ENCODE measurements at regions of chr5 and their contacts with region 1.

Region 1: GRCh38 chr5:115544436-115545350 is at the start of gene FEM1C:
- DNase-seq: peak; percentile 97
- ATAC-seq: peak; percentile 97
- H3K4me3 ChIP-seq: peak within 1 kb of the TSS; percentile 86
- H3K27ac ChIP-seq: peak within 1 kb of the TSS; percentile 92
- H3K4me1 ChIP-seq: peaks cover 2% of the 10 kb centered on the region; the same call in 1 of the 2 replicates
- H3K27me3 ChIP-seq: no peaks in the 10 kb centered on the region
- CTCF ChIP-seq: no peak
- POLR2A ChIP-seq: peak; percentile 97
- RAD21 ChIP-seq: no peak
- total RNA-seq, gene FEM1C: 21.5 and 30.3 TPM in 2 replicates

Region 2: DNA sequence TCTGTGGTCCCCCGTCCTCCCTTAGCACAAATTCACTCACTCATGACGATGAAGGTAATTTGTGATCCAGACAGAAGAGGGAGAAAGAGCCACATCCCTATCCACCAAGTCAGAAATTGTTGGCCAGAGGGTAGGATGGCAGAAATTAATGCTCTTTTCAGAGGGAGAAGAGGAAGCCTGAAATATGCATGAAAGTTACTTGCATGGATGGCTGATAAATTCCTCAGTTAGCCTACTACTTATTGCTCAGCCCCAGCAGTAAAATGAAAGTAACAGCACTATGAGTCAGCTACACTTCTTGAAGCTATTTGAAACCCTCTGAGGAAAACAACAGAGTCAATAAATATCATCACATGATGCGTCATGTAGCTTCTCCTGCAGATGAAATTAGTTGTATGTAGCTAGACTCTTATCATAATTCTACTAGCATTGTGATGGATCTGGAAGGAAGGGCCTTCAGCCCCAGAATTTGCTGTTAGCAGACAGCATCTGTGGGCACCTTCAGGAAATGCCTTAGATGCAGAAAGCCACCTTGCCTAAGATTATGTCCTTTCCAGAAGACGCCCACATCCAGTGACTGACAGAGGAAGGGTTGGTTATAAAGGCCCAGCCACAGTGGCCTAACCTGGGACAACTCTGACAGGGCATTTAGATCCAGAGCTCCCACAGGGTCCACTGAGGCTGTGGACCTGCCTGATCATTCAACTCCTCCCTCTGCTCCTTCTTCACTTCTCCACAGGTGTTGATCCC is 167.1 kb before region 1 on chr5:
- CTCF ChIA-PET with region 1: interaction called, 3 read pairs
- POLR2A ChIA-PET with region 1: no interaction called
- dilution Hi-C with region 1: no loop called
- in situ Hi-C with region 1: no loop called
- intact Hi-C with region 1: loop called (anchors 1 kb)
- DNase-seq: peak; percentile 94
- ATAC-seq: peak; percentile 93
- H3K4me3 ChIP-seq: peak overlapping the region; percentile 0; the same call in 1 of the 2 replicates
- H3K27ac ChIP-seq: peak overlapping the region; percentile 35; the same call in 1 of the 2 replicates
- H3K4me1 ChIP-seq: peaks cover 6% of the 10 kb centered on the region
- H3K27me3 ChIP-seq: no peaks in the 10 kb centered on the region
- CTCF ChIP-seq: peak; percentile 48
- POLR2A ChIP-seq: no peak
- RAD21 ChIP-seq: peak; percentile 59

Region 3: GRCh38 chr5:115432691-115433090 is 112.0 kb before region 1 on chr5:
- CTCF ChIA-PET with region 1: interaction called, 3 read pairs
- POLR2A ChIA-PET with region 1: no interaction called
- dilution Hi-C with region 1: no loop called
- in situ Hi-C with region 1: no loop called
- intact Hi-C with region 1: loop called (anchors 5 kb)
- DNase-seq: peak; percentile 61
- ATAC-seq: peak; percentile 63
- H3K4me3 ChIP-seq: no peak overlapping the region
- H3K27ac ChIP-seq: no peak overlapping the region
- H3K4me1 ChIP-seq: 0 out of 2 replicates have a peak, but pooled peaks cover 2% of the 10 kb centered on the region
- H3K27me3 ChIP-seq: no peaks in the 10 kb centered on the region; the same call in 1 of the 2 replicates
- CTCF ChIP-seq: no peak
- POLR2A ChIP-seq: no peak
- RAD21 ChIP-seq: no peak

Region 4: GRCh38 chr5:115586601-115587048 is 41.9 kb after region 1 on chr5:
- CTCF ChIA-PET with region 1: no interaction called
- POLR2A ChIA-PET with region 1: no interaction called
- dilution Hi-C with region 1: no loop called
- in situ Hi-C with region 1: no loop called
- intact Hi-C with region 1: loop called (anchors 2 kb)
- DNase-seq: peak; percentile 54
- ATAC-seq: peak; percentile 52; the same call in 1 of the 2 replicates
- H3K4me3 ChIP-seq: no peak overlapping the region
- H3K27ac ChIP-seq: no peak overlapping the region
- H3K4me1 ChIP-seq: peaks cover 6% of the 10 kb centered on the region
- H3K27me3 ChIP-seq: no peaks in the 10 kb centered on the region
- CTCF ChIP-seq: peak; percentile 67
- POLR2A ChIP-seq: no peak
- RAD21 ChIP-seq: peak; percentile 77

Region 5: GRCh38 chr5:115831163-115831768 is 286.6 kb after region 1 on chr5:
- CTCF ChIA-PET with region 1: no interaction called
- POLR2A ChIA-PET with region 1: no interaction called
- dilution Hi-C with region 1: no loop called
- in situ Hi-C with region 1: no loop called
- intact Hi-C with region 1: loop called (anchors 10 kb)
- DNase-seq: peak; percentile 49
- ATAC-seq: peak; percentile 66
- H3K4me3 ChIP-seq: no peak overlapping the region
- H3K27ac ChIP-seq: no peak overlapping the region
- H3K4me1 ChIP-seq: no peaks in the 10 kb centered on the region
- H3K27me3 ChIP-seq: no peaks in the 10 kb centered on the region
- CTCF ChIP-seq: peak; percentile 67
- POLR2A ChIP-seq: no peak
- RAD21 ChIP-seq: peak; percentile 55

Region 6: DNA sequence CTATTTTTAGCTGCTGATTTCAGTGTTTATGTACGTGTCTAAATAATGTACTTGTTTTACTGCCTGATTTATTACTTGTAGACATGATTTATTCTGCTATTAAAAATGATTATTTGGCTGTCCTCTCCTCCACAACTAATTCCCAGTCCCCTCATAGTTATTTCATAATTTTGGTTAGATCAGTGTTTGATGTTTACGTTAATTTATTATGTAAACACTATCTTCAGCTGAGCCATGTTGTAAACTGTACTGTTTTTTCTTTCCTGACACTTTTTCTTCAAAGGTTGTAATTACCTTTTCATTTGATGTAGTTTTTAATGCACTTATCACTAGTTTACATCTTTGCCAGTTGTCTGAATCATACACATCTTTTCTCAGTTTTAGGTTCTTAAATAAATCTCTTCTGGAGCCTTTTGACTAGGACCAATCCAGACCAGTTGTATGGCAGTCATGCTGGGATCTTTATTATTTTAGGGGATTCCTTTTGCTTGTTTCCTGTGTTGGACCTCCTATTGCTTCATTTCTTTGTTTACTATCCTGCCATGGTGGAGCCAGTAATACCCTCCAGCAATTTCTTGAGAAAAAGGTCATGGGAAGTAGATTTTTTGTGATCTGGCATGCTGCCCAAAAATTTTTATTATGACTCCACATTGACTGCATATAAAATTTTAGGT is 313.1 kb after region 1 on chr5:
- CTCF ChIA-PET with region 1: no interaction called
- POLR2A ChIA-PET with region 1: no interaction called
- dilution Hi-C with region 1: no loop called
- in situ Hi-C with region 1: no loop called
- intact Hi-C with region 1: no loop called
- DNase-seq: peak; percentile 35
- ATAC-seq: peak; percentile 59
- H3K4me3 ChIP-seq: no peak overlapping the region
- H3K27ac ChIP-seq: no peak overlapping the region
- H3K4me1 ChIP-seq: peaks cover 9% of the 10 kb centered on the region
- H3K27me3 ChIP-seq: no peaks in the 10 kb centered on the region
- CTCF ChIP-seq: no peak
- POLR2A ChIP-seq: no peak
- RAD21 ChIP-seq: no peak

Measured in IMR-90 (cell line).